Common myeloid progenitor, CD34-positive (primary cell): ENCODE measurements at regions of chr9 and their contacts with region 1.

Region 1: GRCh38 chr9:72038890-72039410 is 21.5 kb downstream of the C9orf57 start:
- DNase-seq: peak; percentile 57 to 76 (median 62)
- H3K4me3 ChIP-seq: no peak overlapping the region
- H3K27ac ChIP-seq: no peak overlapping the region
- H3K4me1 ChIP-seq: peaks cover 0 to 8% (median 3%) of the 10 kb centered on the region in 4 experiments
- H3K27me3 ChIP-seq: no peaks in the 10 kb centered on the region

Region 2: GRCh38 chr9:72022841-72023240 is 16.1 kb before region 1 on chr9:
- CTCF ChIA-PET with region 1: interaction called, 33 read pairs
- POLR2A ChIA-PET with region 1: no interaction called
- DNase-seq: peak; percentile 39 to 73 (median 70)
- H3K4me3 ChIP-seq: no peak overlapping the region
- H3K27ac ChIP-seq: no peak overlapping the region
- H3K4me1 ChIP-seq: peaks cover 0 to 2% (median 0%) of the 10 kb centered on the region in 4 experiments
- H3K27me3 ChIP-seq: no peaks in the 10 kb centered on the region

Region 3: DNA sequence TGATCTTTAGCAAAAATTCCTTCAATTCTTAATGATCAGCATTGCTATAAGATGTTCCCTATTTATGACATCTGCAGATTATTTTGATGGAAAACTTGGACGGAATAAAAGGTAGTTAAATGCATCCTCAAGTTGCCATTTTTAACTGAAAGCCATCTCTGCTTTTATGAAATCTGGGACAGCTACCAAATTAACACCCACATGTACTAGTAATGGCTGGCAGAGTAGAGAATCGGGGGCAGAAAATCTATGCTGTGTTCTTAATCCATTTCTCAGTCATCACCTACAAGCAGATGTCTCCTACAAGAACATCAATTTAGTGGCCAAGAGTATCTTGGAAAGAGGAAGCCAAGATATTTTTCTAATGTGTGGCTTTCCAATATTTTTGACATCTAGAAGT is 43.6 kb after region 1 on chr9:
- CTCF ChIA-PET with region 1: no interaction called
- POLR2A ChIA-PET with region 1: no interaction called
- DNase-seq: no peak
- H3K4me3 ChIP-seq: no peak overlapping the region
- H3K27ac ChIP-seq: no peak overlapping the region
- H3K4me1 ChIP-seq: no peaks in the 10 kb centered on the region
- H3K27me3 ChIP-seq: peaks cover 0 to 2% (median 0%) of the 10 kb centered on the region in 5 experiments

Region 4: DNA sequence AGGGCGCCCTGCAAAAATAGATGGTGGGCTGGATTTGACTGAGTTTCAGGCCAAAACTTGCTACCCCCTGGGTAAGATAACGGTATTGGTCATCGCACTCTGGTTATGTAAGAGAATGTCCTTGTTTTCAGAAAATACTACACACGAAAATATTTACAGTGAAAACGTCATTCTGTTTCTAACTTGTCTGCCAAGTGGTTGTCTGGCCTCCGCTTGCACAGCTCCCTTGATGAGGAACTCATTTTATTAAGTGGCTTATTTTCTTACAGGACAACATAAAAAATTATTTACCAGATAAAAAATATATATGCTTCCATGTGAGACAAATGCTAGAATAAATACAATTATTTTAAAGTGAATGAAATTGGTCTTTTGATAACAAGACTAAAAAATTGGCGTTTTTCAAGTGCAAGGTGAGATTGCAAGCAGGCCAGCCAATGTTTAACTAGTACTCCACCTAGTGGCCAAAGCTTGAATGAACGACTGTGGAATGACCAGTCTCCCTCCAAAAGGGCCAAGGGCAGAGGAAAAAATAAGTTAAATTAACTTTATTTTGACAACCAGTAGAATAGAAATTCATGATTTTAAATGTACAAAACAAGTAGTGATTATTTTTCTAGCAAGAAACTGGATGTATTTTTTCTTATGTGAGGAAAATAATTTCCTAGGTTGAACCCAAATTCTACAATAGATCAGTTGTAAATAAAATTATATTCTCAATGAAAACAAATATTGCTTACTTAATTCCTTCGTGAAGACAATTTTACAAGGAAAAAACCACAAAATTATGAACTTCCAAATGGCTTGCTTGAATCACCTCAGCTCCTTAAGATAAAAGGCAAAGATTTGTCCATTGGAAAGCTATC is 232.9 kb after region 1 on chr9:
- CTCF ChIA-PET with region 1: interaction called, 114 read pairs
- POLR2A ChIA-PET with region 1: no interaction called
- DNase-seq: peak; percentile 33 to 68 (median 58)
- H3K4me3 ChIP-seq: no peak overlapping the region
- H3K27ac ChIP-seq: no peak overlapping the region
- H3K4me1 ChIP-seq: peaks cover 0 to 6% (median 1%) of the 10 kb centered on the region in 4 experiments
- H3K27me3 ChIP-seq: peaks cover 0 to 5% (median 0%) of the 10 kb centered on the region in 5 experiments

Region 5: DNA sequence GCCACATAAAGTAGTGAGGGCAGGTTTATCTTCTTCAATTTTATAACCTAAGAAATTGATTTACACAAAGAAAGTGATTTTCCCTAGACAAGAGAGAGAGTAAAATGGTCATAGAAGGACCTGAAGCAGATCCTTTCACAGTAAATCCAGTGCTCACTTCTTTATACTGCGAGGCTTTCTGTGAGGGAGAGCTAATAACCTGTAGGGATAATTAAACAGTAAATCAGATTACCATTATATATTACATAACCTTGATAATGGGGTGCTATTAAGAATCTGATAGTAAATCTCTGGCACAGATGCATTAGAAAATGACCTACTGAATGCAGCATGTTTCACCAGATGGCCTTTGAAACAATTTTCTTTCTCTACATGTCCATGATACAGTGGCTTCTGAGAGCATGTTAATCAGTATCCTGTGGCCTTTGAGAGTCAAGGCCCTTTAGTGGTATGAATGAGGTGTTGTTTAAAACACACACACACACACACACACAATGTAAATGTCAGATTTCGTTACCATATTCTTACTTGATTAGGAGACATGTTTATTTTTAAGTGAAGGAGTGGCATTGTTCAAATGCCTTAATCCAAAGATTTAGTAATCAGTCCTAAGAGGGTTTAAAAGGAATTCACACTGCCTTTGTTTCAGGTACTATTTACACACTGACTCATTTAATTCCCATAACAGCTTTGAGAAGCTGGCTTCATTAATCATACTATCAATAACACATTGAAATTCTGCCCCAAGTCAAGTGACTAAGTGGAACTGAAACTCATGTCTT is 789.2 kb after region 1 on chr9:
- CTCF ChIA-PET with region 1: interaction called, 16 read pairs
- POLR2A ChIA-PET with region 1: no interaction called
- DNase-seq: no peak
- H3K4me3 ChIP-seq: no peak overlapping the region
- H3K27ac ChIP-seq: no peak overlapping the region
- H3K4me1 ChIP-seq: no peaks in the 10 kb centered on the region
- H3K27me3 ChIP-seq: no peaks in the 10 kb centered on the region